Upper lobe of right lung (tissue), 1 donor: ENCODE measurements at regions of chr7 and their contacts with region 1.

Region 1: GRCh38 chr7:29105752-29106668 is 40.3 kb downstream of the CPVL start:
- DNase-seq: no peak
- ATAC-seq: peak; percentile 88
- H3K4me3 ChIP-seq: no peak overlapping the region
- H3K27ac ChIP-seq: no peak overlapping the region
- H3K4me1 ChIP-seq: peaks cover 11% of the 10 kb centered on the region
- H3K27me3 ChIP-seq: peaks cover 4% of the 10 kb centered on the region
- CTCF ChIP-seq: peak; percentile 77

Region 2: DNA sequence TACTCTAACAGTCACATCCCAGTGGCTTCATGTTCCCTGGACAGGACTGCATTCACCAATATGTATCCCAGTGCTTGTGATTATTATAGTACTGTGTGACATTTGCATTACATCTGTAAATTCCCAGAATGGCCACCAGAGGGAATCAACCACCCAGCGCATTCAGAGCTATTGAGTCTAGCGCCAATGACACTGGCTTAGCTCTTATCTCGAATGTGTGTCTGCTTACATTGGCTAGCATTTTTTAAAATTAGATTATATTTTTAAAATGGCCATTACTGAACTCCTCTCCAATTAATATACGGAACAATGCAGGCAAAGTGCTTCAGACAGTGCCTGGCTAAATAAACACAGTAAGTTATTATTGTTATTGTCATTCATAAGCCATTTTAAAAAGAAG is 184.2 kb before region 1 on chr7:
- intact Hi-C with region 1: loop called (anchors 5 kb)
- DNase-seq: no peak
- ATAC-seq: peak; percentile 96
- H3K4me3 ChIP-seq: no peak overlapping the region
- H3K27ac ChIP-seq: no peak overlapping the region
- H3K4me1 ChIP-seq: peaks cover 7% of the 10 kb centered on the region
- H3K27me3 ChIP-seq: no peaks in the 10 kb centered on the region
- CTCF ChIP-seq: peak; percentile 90

Region 3: GRCh38 chr7:28955718-28956619 is 150.0 kb before region 1 on chr7:
- intact Hi-C with region 1: loop called (anchors 10 kb)
- DNase-seq: peak; percentile 93
- ATAC-seq: peak; percentile 80
- H3K4me3 ChIP-seq: peak overlapping the region; percentile 54
- H3K27ac ChIP-seq: peak overlapping the region; percentile 49
- H3K4me1 ChIP-seq: peaks cover 45% of the 10 kb centered on the region
- H3K27me3 ChIP-seq: peaks cover 26% of the 10 kb centered on the region
- CTCF ChIP-seq: peak; percentile 51